GM10248 (cell line): ENCODE measurements at regions of chr15 and their contacts with region 1.

Region 1: GRCh38 chr15:51600114-51600513 is 22.5 kb downstream of the DMXL2 start:
- DNase-seq: no peak
- CTCF ChIP-seq: no peak

Region 2: GRCh38 chr15:51613951-51614350 is 13.8 kb after region 1 on chr15:
- CTCF ChIA-PET with region 1: interaction called, 12 read pairs
- POLR2A ChIA-PET with region 1: no interaction called
- DNase-seq: no peak
- CTCF ChIP-seq: no peak

Region 3: GRCh38 chr15:51708013-51708412 is 107.9 kb after region 1 on chr15:
- CTCF ChIA-PET with region 1: no interaction called
- POLR2A ChIA-PET with region 1: no interaction called
- DNase-seq: no peak
- CTCF ChIP-seq: no peak